Mammary epithelial cell (primary cell): ENCODE measurements at regions of chr12 and their contacts with region 1.

Region 1: GRCh38 chr12:123056053-123056741 is 75.7 kb downstream of the ARL6IP4 start:
- DNase-seq: no peak
- H3K4me3 ChIP-seq: no peak overlapping the region
- H3K27ac ChIP-seq: no peak overlapping the region
- H3K4me1 ChIP-seq: no peaks in the 10 kb centered on the region
- H3K27me3 ChIP-seq: no peaks in the 10 kb centered on the region
- CTCF ChIP-seq: no peak

Region 2: GRCh38 chr12:123013185-123014095 is 42.8 kb before region 1 on chr12:
- CTCF ChIA-PET with region 1: no interaction called
- dilution Hi-C with region 1: loop called (anchors 5 kb)
- in situ Hi-C with region 1: no loop called
- intact Hi-C with region 1: no loop called
- DNase-seq: no peak
- H3K4me3 ChIP-seq: no peak overlapping the region
- H3K27ac ChIP-seq: no peak overlapping the region
- H3K4me1 ChIP-seq: peaks cover 2% of the 10 kb centered on the region
- H3K27me3 ChIP-seq: no peaks in the 10 kb centered on the region
- CTCF ChIP-seq: no peak

Region 3: DNA sequence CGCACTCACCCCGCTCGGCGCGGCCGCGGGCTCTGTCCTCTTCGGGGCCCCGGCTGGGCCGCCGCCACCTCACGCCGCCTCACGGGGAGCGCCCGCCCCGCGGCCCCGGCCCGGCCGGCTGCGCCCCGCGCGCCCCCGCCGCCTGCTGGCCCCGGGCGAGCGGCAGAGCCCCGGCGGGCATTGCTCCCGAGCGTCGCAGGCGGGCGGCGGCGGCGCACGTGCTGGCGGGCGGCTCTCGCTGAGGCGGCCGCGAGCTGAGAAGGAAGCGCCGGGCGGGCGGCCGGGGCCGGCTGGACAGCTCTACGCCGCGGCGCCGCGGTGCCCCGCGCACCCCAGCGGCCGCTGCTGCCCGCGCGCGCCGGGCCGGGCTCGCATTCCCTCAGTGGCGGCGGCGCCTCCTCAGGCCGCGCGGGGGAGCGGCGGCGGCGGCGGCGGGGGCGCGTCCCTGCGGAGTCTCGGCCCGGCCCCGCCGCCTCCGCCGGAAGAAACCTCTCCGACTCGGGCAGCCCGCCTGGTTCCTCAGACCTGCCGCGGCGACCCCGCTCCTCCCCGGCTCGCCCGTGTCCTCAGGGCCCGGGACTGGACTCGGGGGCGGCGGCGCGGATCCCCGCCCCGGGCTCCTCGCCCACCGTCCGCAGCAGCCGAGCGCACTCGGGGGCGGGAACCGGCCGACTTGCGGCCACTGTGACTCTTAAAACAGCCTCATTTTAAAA is 94.7 kb after region 1 on chr12 and contains the start of gene PITPNM2:
- CTCF ChIA-PET with region 1: no interaction called
- dilution Hi-C with region 1: loop called (anchors 5 kb)
- in situ Hi-C with region 1: no loop called
- intact Hi-C with region 1: no loop called
- DNase-seq: peak; percentile 57
- H3K4me3 ChIP-seq: peak within 1 kb of the TSS; percentile 79 to 80 (median 79)
- H3K27ac ChIP-seq: peak within 1 kb of the TSS; percentile 62
- H3K4me1 ChIP-seq: peaks cover 18% of the 10 kb centered on the region
- H3K27me3 ChIP-seq: no peaks in the 10 kb centered on the region
- CTCF ChIP-seq: no peak
- total RNA-seq, gene PITPNM2: 7.5 to 14.9 TPM